ENCODE measurements at regions of chr2 and their contacts with region 1.

Region 1: GRCh38 chr2:85865539-85866164 is 23.1 kb downstream of the ST3GAL5 start:
- DNase-seq: peak; percentile 41
- ATAC-seq: peak; percentile 46
- H3K4me3 ChIP-seq: no peak overlapping the region
- H3K27ac ChIP-seq: no peak overlapping the region
- H3K4me1 ChIP-seq: peaks cover 13% of the 10 kb centered on the region
- H3K27me3 ChIP-seq: no peaks in the 10 kb centered on the region
- CTCF ChIP-seq: no peak
- POLR2A ChIP-seq: no peak
- RAD21 ChIP-seq: no peak

Region 2: DNA sequence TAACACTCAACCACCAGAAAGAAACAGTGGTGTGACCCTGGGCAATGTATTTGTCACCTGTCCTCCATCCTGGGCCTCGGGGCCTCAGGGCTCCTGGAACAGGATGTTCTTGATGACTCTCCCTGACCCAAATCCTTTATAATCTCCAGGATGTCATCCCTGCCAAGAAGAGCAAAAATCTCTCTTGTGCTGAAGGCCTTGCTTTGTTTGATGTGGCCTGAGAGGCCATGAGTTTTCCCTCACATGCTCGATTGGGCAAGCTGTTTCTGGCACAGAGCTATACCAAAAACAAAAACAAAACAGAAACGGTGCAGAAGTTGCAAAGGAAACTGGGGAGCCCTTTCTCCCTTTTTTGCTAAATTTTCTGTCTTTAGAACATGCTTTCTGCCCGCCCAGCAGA is 58.9 kb after region 1 on chr2:
- CTCF ChIA-PET with region 1: no interaction called
- POLR2A ChIA-PET with region 1: no interaction called
- dilution Hi-C with region 1: no loop called
- in situ Hi-C with region 1: no loop called
- intact Hi-C with region 1: loop called (anchors 10 kb)
- DNase-seq: peak; percentile 51
- ATAC-seq: no peak
- H3K4me3 ChIP-seq: no peak overlapping the region
- H3K27ac ChIP-seq: peak overlapping the region; percentile 38; the same call in 1 of the 2 replicates
- H3K4me1 ChIP-seq: peaks cover 21% of the 10 kb centered on the region
- H3K27me3 ChIP-seq: no peaks in the 10 kb centered on the region
- CTCF ChIP-seq: no peak
- POLR2A ChIP-seq: no peak
- RAD21 ChIP-seq: no peak

Measured in IMR-90 (cell line).